ENCODE measurements at regions of chr18 and their contacts with region 1.

Region 1: GRCh38 chr18:43692099-43692690 is 414.9 kb upstream of the SYT4 start:
- DNase-seq: no peak
- H3K4me3 ChIP-seq: no peak overlapping the region
- H3K27ac ChIP-seq: no peak overlapping the region
- H3K27me3 ChIP-seq: no peaks in the 10 kb centered on the region
- CTCF ChIP-seq: no peak

Region 2: DNA sequence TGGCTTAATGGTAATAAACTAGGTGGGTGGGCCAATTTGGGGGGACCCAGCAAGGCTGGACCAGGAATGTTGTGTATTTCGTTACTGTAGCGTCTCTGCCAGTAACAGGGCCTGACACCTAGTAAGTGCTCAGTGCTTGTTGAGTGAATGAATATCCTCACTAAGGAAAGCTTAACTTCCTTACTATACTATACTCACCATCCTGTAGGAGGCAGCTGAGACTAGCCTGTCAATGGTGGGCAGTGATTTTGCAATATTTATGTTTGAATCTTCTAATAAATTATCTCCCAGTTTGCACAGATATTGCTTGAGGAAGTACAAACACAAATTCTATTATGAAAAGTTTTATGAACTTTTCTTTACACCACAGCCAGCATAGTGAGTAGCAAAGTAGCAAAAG is 44.2 kb before region 1 on chr18:
- CTCF ChIA-PET with region 1: no interaction called
- POLR2A ChIA-PET with region 1: no interaction called
- DNase-seq: no peak
- H3K4me3 ChIP-seq: no peak overlapping the region
- H3K27ac ChIP-seq: no peak overlapping the region
- H3K27me3 ChIP-seq: no peaks in the 10 kb centered on the region
- CTCF ChIP-seq: peak; percentile 42

Region 3: GRCh38 chr18:43869451-43870008 is 177.3 kb after region 1 on chr18:
- CTCF ChIA-PET with region 1: no interaction called
- POLR2A ChIA-PET with region 1: no interaction called
- DNase-seq: no peak
- H3K4me3 ChIP-seq: no peak overlapping the region
- H3K27ac ChIP-seq: no peak overlapping the region
- H3K27me3 ChIP-seq: no peaks in the 10 kb centered on the region
- CTCF ChIP-seq: no peak

Region 4: DNA sequence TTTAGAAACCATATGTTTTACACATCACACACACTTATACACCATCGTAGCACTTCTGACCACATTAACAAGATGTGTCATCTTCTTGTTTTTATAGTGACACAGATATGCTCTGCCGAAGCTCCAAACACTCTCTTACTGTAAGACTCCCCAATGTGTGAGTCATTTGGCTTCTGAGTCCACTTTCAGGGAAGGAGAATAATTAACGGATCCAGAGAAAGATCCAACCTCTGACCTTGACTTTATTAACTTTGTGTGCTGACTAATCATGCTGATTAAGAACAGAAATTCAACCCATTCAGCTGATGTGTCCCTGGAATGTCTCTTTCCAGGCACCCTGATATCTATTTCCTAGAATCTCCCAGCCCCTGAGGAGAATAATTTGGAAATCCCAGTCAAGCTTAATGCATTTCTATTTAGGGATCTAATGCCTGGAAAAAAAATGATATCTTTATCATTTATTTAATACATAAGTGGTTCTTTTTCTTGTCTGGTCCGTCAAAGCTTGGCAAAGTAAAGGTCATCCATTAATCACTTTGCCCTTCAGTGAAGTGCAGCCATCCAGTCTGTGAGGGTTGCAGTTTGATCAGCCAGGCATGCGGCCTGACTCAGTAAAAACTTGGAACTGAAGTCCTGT is 200.9 kb after region 1 on chr18:
- CTCF ChIA-PET with region 1: no interaction called
- POLR2A ChIA-PET with region 1: no interaction called
- DNase-seq: peak; percentile 74
- H3K4me3 ChIP-seq: no peak overlapping the region
- H3K27ac ChIP-seq: no peak overlapping the region
- H3K27me3 ChIP-seq: no peaks in the 10 kb centered on the region
- CTCF ChIP-seq: no peak

Region 5: DNA sequence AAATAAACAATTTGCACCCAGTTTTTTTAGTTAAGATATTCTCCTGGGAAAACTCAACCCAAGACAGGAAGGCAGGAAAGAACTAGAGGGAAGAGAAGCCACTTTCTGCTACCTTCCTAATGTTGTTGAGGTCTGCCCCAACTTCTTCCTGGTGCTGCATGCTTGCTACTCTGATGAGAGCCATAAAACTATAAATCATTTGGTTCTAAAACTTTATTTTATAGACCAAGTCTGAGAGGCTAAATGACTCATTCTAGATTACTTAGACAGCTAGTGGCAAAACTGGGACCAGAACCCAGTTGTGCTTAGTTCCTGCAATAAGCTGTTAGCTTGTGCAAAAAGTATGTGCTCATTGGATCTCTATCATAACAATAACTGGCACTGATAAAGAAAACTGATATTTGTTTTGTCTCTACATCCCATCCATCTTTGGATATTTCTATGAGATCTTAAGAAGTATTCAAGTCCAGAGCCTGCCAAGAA is 1578.1 kb after region 1 on chr18:
- CTCF ChIA-PET with region 1: interaction called, 10 read pairs
- POLR2A ChIA-PET with region 1: no interaction called
- DNase-seq: no peak
- H3K4me3 ChIP-seq: no peak overlapping the region
- H3K27ac ChIP-seq: no peak overlapping the region
- H3K27me3 ChIP-seq: peaks cover 5% of the 10 kb centered on the region
- CTCF ChIP-seq: no peak

Measured in AG04450 (cell line).